Caco-2 (cell line): ENCODE measurements at regions of chr22 and their contacts with region 1.

Region 1: DNA sequence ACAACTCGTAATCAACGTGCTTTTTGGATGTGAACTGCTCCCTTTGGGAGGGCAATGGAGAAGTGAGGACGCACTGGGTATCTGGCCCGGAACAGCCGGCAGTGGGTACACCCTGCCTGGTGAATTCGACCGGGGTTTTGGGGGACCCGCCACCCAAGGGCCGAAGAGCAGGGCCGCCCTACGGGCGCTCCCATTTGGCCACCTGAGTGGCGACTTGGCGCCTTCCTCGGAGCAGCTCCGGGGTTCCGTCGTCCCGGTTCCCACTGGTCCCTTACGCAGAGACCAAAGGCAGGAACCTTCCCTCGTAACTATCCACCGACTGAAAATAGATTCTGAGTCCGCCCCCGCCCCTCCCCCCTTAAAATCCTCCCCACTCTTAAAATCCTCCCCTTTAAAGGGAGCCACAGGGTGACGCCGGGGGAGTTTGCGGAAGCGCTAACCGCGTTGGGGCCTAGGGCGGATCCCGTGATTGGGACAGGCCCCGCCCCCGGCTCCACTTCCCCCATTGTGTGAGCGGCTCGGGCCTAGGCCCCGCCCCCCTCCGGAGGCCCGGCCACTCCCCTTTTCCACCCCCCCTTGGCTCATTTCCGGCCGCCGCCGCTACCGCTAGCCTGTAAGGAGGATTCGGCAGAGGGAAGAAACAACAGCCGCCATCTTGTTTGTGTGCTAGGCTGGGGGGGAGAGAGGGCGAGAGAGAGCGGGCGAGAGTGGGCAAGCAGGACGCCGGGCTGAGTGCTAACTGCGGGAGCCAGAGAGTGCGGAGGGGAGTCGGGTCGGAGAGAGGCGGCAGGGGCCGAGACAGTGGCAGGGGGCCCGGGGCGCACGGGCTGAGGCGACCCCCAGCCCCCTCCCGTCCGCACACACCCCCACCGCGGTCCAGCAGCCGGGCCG is 1.0 kb upstream of the EP300 start:
- DNase-seq: peak; percentile 97 to 98
- H3K4me3 ChIP-seq: peak overlapping the region; percentile 97
- H3K4me3 Mint-ChIP-seq: peak overlapping the region; percentile 79
- H3K27ac Mint-ChIP-seq: peak overlapping the region; percentile 96
- H3K4me1 ChIP-seq: 0 out of 2 replicates have a peak, but pooled peaks cover 3% of the 10 kb centered on the region
- H3K4me1 Mint-ChIP-seq: peaks cover 6% of the 10 kb centered on the region
- H3K27me3 ChIP-seq: no peaks in the 10 kb centered on the region
- H3K27me3 Mint-ChIP-seq: no peaks in the 10 kb centered on the region
- CTCF ChIP-seq: no peak

Region 2: GRCh38 chr22:41022470-41023298 is 68.7 kb before region 1 on chr22:
- CTCF ChIA-PET with region 1: no interaction called
- POLR2A ChIA-PET with region 1: interaction called, 17 read pairs
- intact Hi-C with region 1: loop called (anchors 1 kb)
- DNase-seq: peak; percentile 96 to 98
- H3K4me3 ChIP-seq: peak overlapping the region; percentile 81
- H3K4me3 Mint-ChIP-seq: peak overlapping the region; percentile 99
- H3K27ac Mint-ChIP-seq: peak overlapping the region; percentile 100
- H3K4me1 ChIP-seq: peaks cover 4% of the 10 kb centered on the region; the same call in 1 of the 2 replicates
- H3K4me1 Mint-ChIP-seq: peaks cover 15% of the 10 kb centered on the region
- H3K27me3 ChIP-seq: no peaks in the 10 kb centered on the region; the same call in 1 of the 2 replicates
- H3K27me3 Mint-ChIP-seq: no peaks in the 10 kb centered on the region
- CTCF ChIP-seq: no peak

Region 3: GRCh38 chr22:41048791-41049717 is 42.3 kb before region 1 on chr22:
- CTCF ChIA-PET with region 1: no interaction called
- POLR2A ChIA-PET with region 1: interaction called, 3 read pairs
- intact Hi-C with region 1: loop called (anchors 5 kb)
- DNase-seq: peak; percentile 88 to 90
- H3K4me3 ChIP-seq: peak overlapping the region; percentile 9
- H3K4me3 Mint-ChIP-seq: peak overlapping the region; percentile 73
- H3K27ac Mint-ChIP-seq: peak overlapping the region; percentile 58
- H3K4me1 ChIP-seq: peaks cover 31% of the 10 kb centered on the region
- H3K4me1 Mint-ChIP-seq: peaks cover 14% of the 10 kb centered on the region
- H3K27me3 ChIP-seq: no peaks in the 10 kb centered on the region
- H3K27me3 Mint-ChIP-seq: no peaks in the 10 kb centered on the region
- CTCF ChIP-seq: no peak

Region 4: GRCh38 chr22:41110968-41111367 is 19.6 kb after region 1 on chr22:
- CTCF ChIA-PET with region 1: no interaction called
- POLR2A ChIA-PET with region 1: no interaction called
- intact Hi-C with region 1: no loop called
- DNase-seq: no peak
- H3K4me3 ChIP-seq: no peak overlapping the region
- H3K4me3 Mint-ChIP-seq: no peak overlapping the region
- H3K27ac Mint-ChIP-seq: no peak overlapping the region
- H3K4me1 ChIP-seq: no peaks in the 10 kb centered on the region
- H3K4me1 Mint-ChIP-seq: peaks cover 7% of the 10 kb centered on the region
- H3K27me3 ChIP-seq: no peaks in the 10 kb centered on the region
- H3K27me3 Mint-ChIP-seq: no peaks in the 10 kb centered on the region
- CTCF ChIP-seq: no peak